Activated T-helper 1 cell treated with anti-CD3 and anti-CD28 coated beads, Interleukin-12 subunit alpha, Interleukin-12 subunit beta, Interleukin-2, Interleukin-4 antibody, amounts not matched to agents 30 ng/mL and 10 ng/mL and 1 ng/mL, durations not matched to agents 14 hours and 24 hours and 36 hours (primary cell): ENCODE measurements at regions of chr6 and their contacts with region 1.

Region 1: GRCh38 chr6:157764178-157765033 is 58.6 kb upstream of the SNX9 start:
- DNase-seq: peak; percentile 80
- H3K4me3 Mint-ChIP-seq: peak overlapping the region; percentile 34
- H3K27ac Mint-ChIP-seq: peak overlapping the region; percentile 98
- H3K4me1 Mint-ChIP-seq: peaks cover 82% of the 10 kb centered on the region
- H3K27me3 Mint-ChIP-seq: peaks cover 10% of the 10 kb centered on the region

Region 2: DNA sequence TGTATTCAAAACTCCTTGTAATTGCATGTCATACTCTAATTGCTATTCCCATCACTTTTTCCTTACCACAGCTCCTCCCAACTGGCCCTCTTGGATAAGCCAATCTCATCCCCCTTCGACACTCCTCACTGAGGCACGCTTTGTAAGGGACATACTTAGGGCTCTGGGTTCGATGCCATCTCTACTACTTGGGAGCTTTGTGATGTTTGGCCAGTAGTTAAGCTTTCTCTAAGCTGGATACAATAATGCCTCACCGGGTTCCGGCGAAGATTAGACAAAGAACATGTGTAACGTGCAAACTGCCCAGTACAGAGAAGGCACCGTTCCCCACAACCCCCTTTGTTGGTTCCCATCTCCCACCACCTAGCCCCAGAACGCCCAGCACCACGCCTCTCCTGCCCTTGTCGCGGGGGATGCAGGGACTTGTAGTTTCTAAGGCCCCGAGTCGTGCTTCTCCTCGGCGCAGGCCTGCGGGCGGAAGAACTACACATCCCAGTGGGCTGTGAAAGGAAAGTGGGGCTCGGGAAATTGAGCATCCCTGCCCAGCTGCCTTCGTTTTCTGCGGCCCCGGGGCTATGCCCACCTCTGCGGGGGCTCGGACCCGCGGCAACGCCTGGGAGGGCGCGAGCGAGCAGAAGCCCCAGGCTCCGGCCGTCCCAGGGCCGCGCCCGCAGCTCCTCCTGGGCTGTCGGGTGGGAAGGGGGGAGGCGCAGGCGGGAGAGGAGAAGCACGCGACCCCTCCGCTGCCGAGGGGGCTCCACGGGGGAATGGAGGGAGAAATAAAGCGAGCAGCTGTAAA is 384.6 kb before region 1 on chr6:
- intact Hi-C with region 1: loop called (anchors 5 kb)
- DNase-seq: peak; percentile 86
- H3K4me3 Mint-ChIP-seq: peak overlapping the region; percentile 88
- H3K27ac Mint-ChIP-seq: peak overlapping the region; percentile 83
- H3K4me1 Mint-ChIP-seq: peaks cover 39% of the 10 kb centered on the region
- H3K27me3 Mint-ChIP-seq: peaks cover 6% of the 10 kb centered on the region

Region 3: GRCh38 chr6:157800420-157801237 is 36.2 kb after region 1 on chr6:
- intact Hi-C with region 1: loop called (anchors 1 kb)
- DNase-seq: peak; percentile 29
- H3K4me3 Mint-ChIP-seq: peak overlapping the region; percentile 45
- H3K27ac Mint-ChIP-seq: peak overlapping the region; percentile 84
- H3K4me1 Mint-ChIP-seq: peaks cover 62% of the 10 kb centered on the region
- H3K27me3 Mint-ChIP-seq: peaks cover 34% of the 10 kb centered on the region

Region 4: DNA sequence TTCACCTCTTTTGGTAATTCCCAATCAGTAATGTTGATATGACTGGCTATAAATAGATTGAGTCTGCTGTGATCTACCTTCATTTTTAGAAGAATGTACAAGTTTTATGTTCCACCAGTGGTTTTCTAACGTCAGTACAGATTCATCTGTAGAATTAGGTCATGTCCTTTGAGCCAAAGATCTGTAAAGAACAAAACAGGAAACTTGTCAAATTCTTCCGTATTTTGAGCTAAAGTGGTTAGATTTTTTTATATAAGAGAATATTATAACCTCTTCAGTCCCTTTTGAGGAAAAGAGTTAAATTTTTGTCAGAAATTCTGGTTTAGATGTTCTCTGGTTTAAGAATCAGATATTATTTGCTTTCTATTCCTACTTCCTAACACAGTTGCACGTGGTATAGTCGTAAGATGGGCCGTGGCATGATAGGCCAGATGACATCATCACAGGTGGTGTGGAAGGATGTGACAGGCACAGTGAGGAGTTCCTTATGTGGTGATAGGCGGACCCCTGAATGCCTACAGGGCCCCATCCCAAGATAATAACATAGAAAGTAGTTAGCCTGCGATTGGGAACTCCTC is 120.9 kb after region 1 on chr6:
- intact Hi-C with region 1: loop called (anchors 1 kb)
- DNase-seq: peak; percentile 60
- H3K4me3 Mint-ChIP-seq: peak overlapping the region; percentile 45
- H3K27ac Mint-ChIP-seq: peak overlapping the region; percentile 88
- H3K4me1 Mint-ChIP-seq: peaks cover 79% of the 10 kb centered on the region
- H3K27me3 Mint-ChIP-seq: no peaks in the 10 kb centered on the region

Region 5: DNA sequence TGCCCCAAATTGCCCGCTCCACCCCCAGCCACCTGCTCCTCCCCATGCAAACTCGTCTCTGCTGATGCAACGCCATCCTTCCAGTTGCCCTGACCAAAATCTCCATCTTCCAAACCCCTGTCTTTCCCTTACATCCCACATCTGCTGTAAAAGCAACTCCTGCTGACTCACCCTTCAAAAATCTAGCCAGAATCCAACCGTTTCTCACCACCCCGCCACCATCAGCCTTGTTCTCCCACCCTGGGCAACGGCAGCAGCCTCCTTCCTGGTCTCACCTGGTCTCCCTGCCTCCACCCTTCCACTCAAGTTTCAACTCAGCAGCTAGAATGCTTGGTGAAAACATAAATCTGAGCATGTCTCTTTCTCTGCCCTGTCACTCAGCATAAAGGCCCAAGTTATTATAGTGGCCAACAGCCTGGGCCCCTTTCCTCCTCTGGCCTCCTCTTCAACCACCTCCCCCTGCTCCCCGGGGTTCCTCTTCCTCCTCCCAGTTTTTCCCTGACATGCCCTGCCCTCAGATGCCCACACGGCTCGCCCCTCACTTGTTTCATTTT is 210.0 kb after region 1 on chr6:
- intact Hi-C with region 1: no loop called
- DNase-seq: no peak
- H3K4me3 Mint-ChIP-seq: no peak overlapping the region
- H3K27ac Mint-ChIP-seq: no peak overlapping the region
- H3K4me1 Mint-ChIP-seq: peaks cover 3% of the 10 kb centered on the region
- H3K27me3 Mint-ChIP-seq: peaks cover 27% of the 10 kb centered on the region

Region 6: DNA sequence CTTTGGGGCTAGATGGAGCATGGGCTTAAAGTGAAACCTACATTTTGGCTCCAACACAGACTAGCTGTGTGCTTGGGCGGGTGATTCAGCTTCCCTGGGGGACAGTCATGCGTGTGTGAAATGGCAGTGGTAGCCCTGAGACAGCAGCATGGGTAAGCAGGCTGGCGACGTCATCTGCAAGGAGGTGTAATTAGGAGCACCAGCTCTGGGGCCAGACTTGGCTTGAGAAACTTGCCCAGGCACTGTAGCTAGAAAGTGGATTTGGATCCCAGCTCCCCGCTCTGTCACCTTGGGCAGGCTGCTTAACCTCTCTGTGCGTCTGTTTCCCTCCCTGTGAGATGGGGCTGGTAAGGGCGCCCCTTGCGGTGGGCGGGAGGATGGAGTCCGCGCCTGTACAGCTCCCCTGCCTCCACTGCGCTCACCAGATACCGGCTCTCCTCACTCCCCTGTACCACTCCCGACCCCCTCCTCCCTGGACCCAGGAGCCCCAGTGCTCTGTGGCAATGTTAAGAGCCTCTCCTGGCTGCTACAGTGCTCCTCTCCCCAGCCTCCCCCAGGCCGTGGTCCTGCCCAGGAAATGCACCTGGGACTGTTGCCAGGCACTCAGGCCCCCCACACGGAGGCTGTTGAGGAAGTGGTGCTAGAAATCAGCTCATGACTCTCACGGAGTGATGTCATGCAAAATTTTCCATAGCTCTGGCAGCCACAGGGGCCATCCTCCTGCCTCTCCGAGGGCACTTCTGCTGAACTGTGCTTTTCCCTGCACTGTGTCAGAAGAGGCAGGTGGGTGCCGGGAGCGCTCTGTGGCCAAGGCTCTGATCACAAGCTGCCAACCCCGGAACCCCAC is 261.9 kb after region 1 on chr6:
- intact Hi-C with region 1: loop called (anchors 1 kb)
- DNase-seq: peak; percentile 76
- H3K4me3 Mint-ChIP-seq: peak overlapping the region; percentile 81
- H3K27ac Mint-ChIP-seq: peak overlapping the region; percentile 99
- H3K4me1 Mint-ChIP-seq: peaks cover 43% of the 10 kb centered on the region
- H3K27me3 Mint-ChIP-seq: no peaks in the 10 kb centered on the region

Region 7: DNA sequence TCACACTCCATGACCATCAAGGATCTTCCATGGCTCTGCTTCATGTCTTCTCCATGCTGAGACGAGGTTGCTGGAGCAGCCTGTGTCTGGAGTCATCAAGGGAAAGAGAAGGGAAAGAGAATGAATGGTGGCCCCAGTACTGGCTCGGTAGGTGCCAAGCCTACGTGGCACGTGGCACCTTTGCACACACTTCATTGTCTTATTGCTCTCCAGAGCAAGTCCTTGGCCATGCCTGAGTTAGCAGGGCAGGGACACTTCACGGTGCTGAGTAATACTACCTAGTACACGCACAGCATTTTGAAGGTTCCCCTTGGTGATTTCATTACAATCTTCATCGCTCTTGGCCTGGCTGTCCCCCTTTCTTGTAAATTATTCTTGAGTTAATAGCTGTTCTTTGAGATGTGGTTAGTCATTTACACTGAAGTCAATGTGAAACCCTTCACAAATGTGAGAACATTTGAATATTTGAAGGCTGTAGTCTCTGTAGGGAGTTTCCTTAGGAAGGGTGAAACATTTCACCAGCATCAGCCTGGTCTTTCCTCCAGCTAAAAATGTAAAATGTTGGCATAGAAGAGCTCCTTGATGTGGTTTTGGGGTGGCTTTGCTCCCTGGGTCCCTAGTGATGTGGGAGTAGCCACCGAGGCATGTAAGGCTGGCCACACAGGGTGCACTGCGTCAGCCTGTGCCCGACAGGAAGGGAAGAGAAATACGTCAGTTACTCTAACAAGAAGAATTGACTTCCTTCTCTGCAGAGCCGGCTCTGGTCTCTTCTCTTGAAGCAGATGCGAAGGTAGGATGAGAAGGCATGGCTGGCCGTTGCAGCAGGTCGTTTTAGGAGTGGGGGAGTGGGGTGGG is 885.1 kb after region 1 on chr6 and contains the start of gene SYTL3:
- intact Hi-C with region 1: loop called (anchors 1 kb)
- DNase-seq: peak; percentile 82
- H3K4me3 Mint-ChIP-seq: peak within 1 kb of the TSS; percentile 87
- H3K27ac Mint-ChIP-seq: peak within 1 kb of the TSS; percentile 93
- H3K4me1 Mint-ChIP-seq: peaks cover 74% of the 10 kb centered on the region
- H3K27me3 Mint-ChIP-seq: no peaks in the 10 kb centered on the region
- total RNA-seq, gene SYTL3: 123 and 139 TPM in 2 replicates